HepG2 (cell line): ENCODE measurements at regions of chr6 and their contacts with region 1.

Region 1: DNA sequence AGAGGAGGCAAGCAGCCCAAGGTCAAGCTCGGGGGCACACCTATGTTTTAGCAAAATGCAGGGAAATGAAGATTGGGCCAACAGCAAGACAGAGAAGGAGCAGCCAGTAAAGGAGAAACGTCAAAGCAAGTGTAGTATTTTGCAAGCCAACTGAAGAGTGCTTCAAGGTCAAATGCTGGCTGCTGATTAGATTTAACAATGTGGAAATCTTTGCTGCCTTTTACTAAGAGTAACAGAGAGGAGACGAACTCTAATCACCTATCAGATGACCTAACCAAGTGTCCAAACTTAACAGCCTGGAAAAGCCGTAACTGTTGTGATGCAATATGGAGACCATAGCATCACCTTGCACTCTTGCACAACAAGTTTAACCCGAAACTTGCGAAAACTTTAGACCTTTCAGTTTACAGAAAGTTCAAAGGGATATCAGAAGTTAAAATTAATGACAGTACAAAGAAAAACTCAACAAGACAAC is 30.4 kb downstream of the AKIRIN2 start:
- DNase-seq: peak; percentile 97
- ATAC-seq: peak; percentile 76
- H3K4me3 ChIP-seq: peak overlapping the region in 1 of 3 experiments; percentile 33; a peak in 1 of 6 replicates
- H3K27ac ChIP-seq: peak overlapping the region; percentile 90
- H3K4me1 ChIP-seq: peaks cover 89% of the 10 kb centered on the region
- H3K27me3 ChIP-seq: no peaks in the 10 kb centered on the region
- CTCF ChIP-seq: no peak
- EP300 ChIP-seq: peak; percentile 91 to 99
- POLR2A ChIP-seq: no peak
- RAD21 ChIP-seq: no peak

Region 2: DNA sequence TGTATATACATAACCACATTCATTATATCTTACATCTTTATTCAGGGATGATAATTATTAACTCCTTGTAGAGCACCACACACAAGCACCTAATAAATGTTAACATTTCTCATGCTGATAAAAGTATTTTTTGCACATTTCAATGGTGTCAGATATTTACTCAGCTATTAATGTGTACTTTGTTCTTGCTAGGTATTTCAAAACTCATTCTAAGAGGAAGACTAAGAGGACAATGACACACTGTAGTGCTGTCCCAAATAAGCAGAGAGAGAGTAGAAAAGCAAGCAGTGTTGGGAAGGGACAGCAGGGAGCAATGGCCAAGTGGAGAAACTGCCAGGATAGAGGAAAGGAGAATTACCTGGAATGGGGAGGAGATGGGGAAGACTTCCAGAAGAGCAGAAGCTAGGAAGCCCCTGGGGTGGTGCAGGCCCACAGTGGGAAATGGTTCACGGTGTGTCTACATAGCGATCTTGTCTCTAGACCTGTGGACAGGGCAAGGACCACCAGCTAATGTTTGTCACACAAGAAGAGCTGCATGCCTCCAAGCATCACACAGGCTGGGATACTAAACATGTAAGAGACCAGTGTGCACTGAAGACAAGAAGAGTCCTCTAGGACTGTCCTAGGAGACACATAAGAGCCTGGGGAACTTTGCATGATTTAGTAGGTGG is 137.1 kb before region 1 on chr6:
- CTCF ChIA-PET with region 1: no interaction called
- POLR2A ChIA-PET with region 1: interaction called, 5 read pairs
- in situ Hi-C with region 1: no loop called
- intact Hi-C with region 1: loop called (anchors 5 kb)
- DNase-seq: peak; percentile 95
- ATAC-seq: peak; percentile 99
- H3K4me3 ChIP-seq: peak overlapping the region in 1 of 3 experiments; percentile 45; a peak in 2 of 6 replicates
- H3K27ac ChIP-seq: peak overlapping the region; percentile 86
- H3K4me1 ChIP-seq: peaks cover 52% of the 10 kb centered on the region
- H3K27me3 ChIP-seq: no peaks in the 10 kb centered on the region
- CTCF ChIP-seq: no peak
- EP300 ChIP-seq: peak in 1 of 2 experiments; percentile 86; a peak in 3 of 4 replicates
- POLR2A ChIP-seq: peak; percentile 23 to 29; a peak in 1 of 4 replicates
- RAD21 ChIP-seq: no peak

Region 3: GRCh38 chr6:87589693-87590549 is 81.7 kb before region 1 on chr6 and contains the starts of genes ORC3 and RARS2:
- CTCF ChIA-PET with region 1: no interaction called
- POLR2A ChIA-PET with region 1: interaction called, 8 read pairs
- in situ Hi-C with region 1: no loop called
- intact Hi-C with region 1: loop called (anchors 5 kb)
- DNase-seq: peak; percentile 93
- ATAC-seq: peak; percentile 99
- H3K4me3 ChIP-seq: peak within 1 kb of the TSS; percentile 90 to 98 (median 95)
- H3K27ac ChIP-seq: peak within 1 kb of the TSS; percentile 80
- H3K4me1 ChIP-seq: peaks cover 59% of the 10 kb centered on the region
- H3K27me3 ChIP-seq: no peaks in the 10 kb centered on the region; a peak in 1 of 5 replicates
- CTCF ChIP-seq: peak; percentile 17; the same call in 1 of the 2 replicates
- EP300 ChIP-seq: no peak
- POLR2A ChIP-seq: peak; percentile 87 to 96
- RAD21 ChIP-seq: no peak
- total RNA-seq, gene ORC3: 43.5 and 56.0 TPM in 2 replicates
- total RNA-seq, gene RARS2: 80.1 and 103 TPM in 2 replicates

Region 4: GRCh38 chr6:87618531-87618930 is 53.1 kb before region 1 on chr6:
- CTCF ChIA-PET with region 1: no interaction called
- POLR2A ChIA-PET with region 1: no interaction called
- in situ Hi-C with region 1: no loop called
- intact Hi-C with region 1: no loop called
- DNase-seq: no peak
- ATAC-seq: no peak
- H3K4me3 ChIP-seq: no peak overlapping the region
- H3K27ac ChIP-seq: no peak overlapping the region
- H3K4me1 ChIP-seq: peaks cover 6% of the 10 kb centered on the region; the same call in 1 of the 2 replicates
- H3K27me3 ChIP-seq: no peaks in the 10 kb centered on the region
- CTCF ChIP-seq: no peak
- EP300 ChIP-seq: no peak
- POLR2A ChIP-seq: no peak
- RAD21 ChIP-seq: no peak

Region 5: GRCh38 chr6:87808005-87808757 is 136.6 kb after region 1 on chr6:
- CTCF ChIA-PET with region 1: no interaction called
- POLR2A ChIA-PET with region 1: no interaction called
- in situ Hi-C with region 1: no loop called
- intact Hi-C with region 1: no loop called
- DNase-seq: no peak
- ATAC-seq: no peak
- H3K4me3 ChIP-seq: no peak overlapping the region
- H3K27ac ChIP-seq: no peak overlapping the region
- H3K4me1 ChIP-seq: peaks cover 46% of the 10 kb centered on the region
- H3K27me3 ChIP-seq: no peaks in the 10 kb centered on the region
- CTCF ChIP-seq: no peak
- EP300 ChIP-seq: no peak
- POLR2A ChIP-seq: no peak
- RAD21 ChIP-seq: no peak